IMR-90 (cell line): ENCODE measurements at regions of chr1 and their contacts with region 1.

Region 1: GRCh38 chr1:115609021-115609420 is 32.7 kb upstream of the VANGL1 start:
- DNase-seq: no peak
- ATAC-seq: no peak
- H3K4me3 ChIP-seq: no peak overlapping the region
- H3K27ac ChIP-seq: no peak overlapping the region
- H3K4me1 ChIP-seq: peaks cover 1% of the 10 kb centered on the region; the same call in 1 of the 2 replicates
- H3K27me3 ChIP-seq: peaks cover 44% of the 10 kb centered on the region
- CTCF ChIP-seq: no peak
- POLR2A ChIP-seq: no peak
- RAD21 ChIP-seq: no peak

Region 2: DNA sequence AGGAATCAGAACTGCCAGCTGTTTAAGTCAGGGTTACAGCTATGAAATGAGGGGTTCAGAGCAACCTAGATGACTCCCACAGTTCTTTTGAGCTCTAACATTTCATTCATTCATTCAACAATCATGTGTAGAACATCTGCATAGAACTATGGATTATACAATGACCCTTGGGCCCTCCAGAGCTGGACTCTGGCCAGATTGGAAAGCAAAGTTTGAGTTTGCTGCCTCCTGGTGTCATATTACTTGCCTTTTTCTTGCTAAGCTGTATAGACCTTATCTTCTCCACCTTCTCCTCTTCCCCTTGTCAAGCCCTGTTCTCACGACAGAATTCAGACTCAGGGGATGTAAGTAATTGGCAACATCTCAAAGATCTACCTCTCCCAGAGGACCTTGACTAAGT is 155.5 kb after region 1 on chr1:
- CTCF ChIA-PET with region 1: interaction called, 16 read pairs
- POLR2A ChIA-PET with region 1: no interaction called
- dilution Hi-C with region 1: no loop called
- in situ Hi-C with region 1: no loop called
- intact Hi-C with region 1: no loop called
- DNase-seq: peak; percentile 18
- ATAC-seq: 0 out of 2 replicates have a peak, but pooled peaks have one; percentile 44
- H3K4me3 ChIP-seq: no peak overlapping the region
- H3K27ac ChIP-seq: no peak overlapping the region
- H3K4me1 ChIP-seq: no peaks in the 10 kb centered on the region
- H3K27me3 ChIP-seq: peaks cover 11% of the 10 kb centered on the region
- CTCF ChIP-seq: peak; percentile 42
- POLR2A ChIP-seq: no peak
- RAD21 ChIP-seq: peak; percentile 42

Region 3: GRCh38 chr1:115771847-115772457 is 162.9 kb after region 1 on chr1:
- CTCF ChIA-PET with region 1: interaction called, 10 read pairs
- POLR2A ChIA-PET with region 1: no interaction called
- dilution Hi-C with region 1: no loop called
- in situ Hi-C with region 1: loop called (anchors 5 kb)
- intact Hi-C with region 1: loop called (anchors 1 kb)
- DNase-seq: peak; percentile 80
- ATAC-seq: peak; percentile 99
- H3K4me3 ChIP-seq: no peak overlapping the region
- H3K27ac ChIP-seq: no peak overlapping the region
- H3K4me1 ChIP-seq: no peaks in the 10 kb centered on the region
- H3K27me3 ChIP-seq: peaks cover 8% of the 10 kb centered on the region
- CTCF ChIP-seq: peak; percentile 90
- POLR2A ChIP-seq: no peak
- RAD21 ChIP-seq: peak; percentile 85

Region 4: DNA sequence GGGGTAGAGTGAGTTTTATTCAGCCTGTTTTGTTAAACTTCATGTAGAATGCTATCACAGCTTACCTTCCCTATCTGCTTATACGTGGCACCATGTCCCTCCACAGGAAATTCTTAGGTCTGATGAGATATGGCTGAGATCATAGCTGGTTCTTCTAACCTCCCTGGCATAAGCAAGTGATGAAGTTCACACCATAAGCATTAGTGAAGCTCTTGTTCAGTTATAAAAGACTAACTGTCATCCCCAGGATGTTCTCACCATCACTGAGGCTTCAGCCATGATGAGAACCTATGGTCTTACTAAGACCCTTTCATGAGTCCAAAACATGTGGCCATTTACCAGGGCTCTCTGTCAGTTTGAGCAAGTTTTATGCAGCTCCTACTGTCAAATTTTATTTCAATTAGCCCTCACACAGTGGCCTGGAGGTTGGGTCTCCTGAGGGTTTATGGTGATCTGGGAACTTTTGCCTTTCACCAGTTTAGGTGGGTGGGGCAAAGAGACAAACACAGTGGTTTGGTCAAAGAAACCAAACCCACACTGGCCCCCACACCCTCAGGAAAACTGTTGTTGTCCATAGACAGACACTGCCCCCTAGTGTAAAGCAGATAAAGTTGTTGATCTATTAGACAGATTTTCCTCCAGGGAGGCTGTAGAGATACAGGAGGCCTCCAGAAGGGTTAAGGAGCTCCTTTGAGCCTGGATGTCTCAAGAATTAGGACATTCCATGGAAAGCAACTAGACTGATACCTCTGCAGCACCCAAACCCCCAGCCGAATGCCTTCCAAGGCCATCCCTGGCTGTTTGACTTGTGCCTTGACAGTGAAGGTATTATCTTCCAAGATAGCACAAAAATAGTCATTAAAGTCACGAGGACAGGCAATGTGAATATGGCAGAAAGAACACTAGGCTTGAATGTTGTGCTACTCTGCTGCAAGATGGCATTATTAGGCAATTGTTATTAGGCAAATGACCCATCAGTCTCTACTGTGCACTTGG is 372.3 kb after region 1 on chr1:
- CTCF ChIA-PET with region 1: interaction called, 3 read pairs
- POLR2A ChIA-PET with region 1: no interaction called
- dilution Hi-C with region 1: no loop called
- in situ Hi-C with region 1: no loop called
- intact Hi-C with region 1: loop called (anchors 10 kb)
- DNase-seq: peak; percentile 16
- ATAC-seq: peak; percentile 49; the same call in 1 of the 2 replicates
- H3K4me3 ChIP-seq: no peak overlapping the region
- H3K27ac ChIP-seq: no peak overlapping the region
- H3K4me1 ChIP-seq: no peaks in the 10 kb centered on the region
- H3K27me3 ChIP-seq: peaks cover 15% of the 10 kb centered on the region
- CTCF ChIP-seq: peak; percentile 55
- POLR2A ChIP-seq: no peak
- RAD21 ChIP-seq: peak; percentile 62